Heart left ventricle (tissue), 16 donors: ENCODE measurements at regions of chr4 and their contacts with region 1.

Region 1: GRCh38 chr4:87322754-87323153 is at the start of gene HSD17B13:
- DNase-seq: no peak
- ATAC-seq: no peak
- H3K4me3 ChIP-seq: no peak within 1 kb of the TSS
- H3K27ac ChIP-seq: no peak within 1 kb of the TSS
- H3K4me1 ChIP-seq: no peaks in the 10 kb centered on the region
- H3K27me3 ChIP-seq: no peaks in the 10 kb centered on the region
- CTCF ChIP-seq: no peak
- POLR2A ChIP-seq: no peak
- total RNA-seq, gene HSD17B13: 0.16 to 0.73 (median 0.35) TPM in 5 of 9 donors, not detected in the others

Region 2: DNA sequence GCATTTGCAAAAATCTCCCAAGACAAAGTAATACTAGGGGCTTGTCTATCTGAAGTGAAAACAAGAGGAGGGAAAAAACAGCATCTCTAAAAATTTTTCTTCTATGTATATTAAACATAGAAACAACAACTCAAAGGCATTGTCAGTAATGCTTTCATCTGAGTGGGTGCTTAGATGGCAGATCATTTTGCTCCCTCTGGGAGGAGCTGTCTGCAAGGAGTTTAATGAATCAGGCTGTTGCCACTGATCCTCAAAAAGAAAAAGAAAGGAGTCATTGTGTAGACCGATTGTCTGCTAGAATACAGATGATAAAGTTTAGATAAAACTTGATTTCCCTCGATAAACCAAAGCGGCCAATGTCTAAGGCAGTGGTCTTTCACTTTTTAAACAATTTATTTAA is 52.6 kb before region 1 on chr4:
- intact Hi-C with region 1: loop called in 1 of 10 experiments (anchors 10 kb)
- DNase-seq: peak in 1 of 5 donors; percentile 11
- ATAC-seq: peak in 2 of 4 donors; percentile 48 to 49
- H3K4me3 ChIP-seq: no peak overlapping the region
- H3K27ac ChIP-seq: no peak overlapping the region
- H3K4me1 ChIP-seq: no peaks in the 10 kb centered on the region
- H3K27me3 ChIP-seq: no peaks in the 10 kb centered on the region
- CTCF ChIP-seq: peak in 11 of 12 donors; percentile 29 to 72 (median 52)
- POLR2A ChIP-seq: no peak

Region 3: DNA sequence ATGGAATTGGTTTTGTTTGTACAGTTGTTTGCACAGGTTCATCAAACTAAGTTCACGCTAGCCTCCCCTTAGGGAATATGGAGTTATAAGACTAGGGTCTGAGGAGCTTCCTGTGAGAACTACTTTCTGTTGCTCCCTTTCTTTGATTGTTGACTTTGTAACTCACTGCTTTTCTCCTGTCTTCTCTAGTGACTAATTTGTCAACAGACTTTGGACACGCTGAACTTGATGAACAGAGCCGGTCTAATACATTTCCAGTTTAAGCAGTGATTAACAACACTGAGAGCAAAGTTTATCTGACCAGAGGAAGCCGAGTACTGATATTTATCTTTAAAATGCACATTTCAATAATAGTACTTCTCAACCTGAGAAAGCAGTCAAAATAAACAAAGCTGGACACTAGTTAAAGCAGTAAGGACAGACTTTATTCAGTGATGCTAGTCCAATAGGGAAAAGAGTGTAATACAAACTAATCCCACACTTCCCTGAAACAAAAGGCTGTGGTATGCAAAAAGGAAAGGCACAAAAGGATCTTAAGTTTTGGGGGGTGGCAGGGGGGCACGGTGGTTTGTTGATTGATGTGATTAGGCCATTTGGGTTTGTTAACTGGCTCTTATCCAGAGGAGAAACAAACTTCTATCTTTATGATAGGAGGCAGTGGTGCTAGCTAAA is 97.0 kb after region 1 on chr4:
- intact Hi-C with region 1: no loop called
- DNase-seq: no peak
- ATAC-seq: no peak
- H3K4me3 ChIP-seq: no peak overlapping the region
- H3K27ac ChIP-seq: no peak overlapping the region
- H3K4me1 ChIP-seq: peaks cover 0 to 25% (median 19%) of the 10 kb centered on the region in 12 donors
- H3K27me3 ChIP-seq: no peaks in the 10 kb centered on the region
- CTCF ChIP-seq: no peak
- POLR2A ChIP-seq: no peak